Gastrocnemius medialis (tissue), 4 donors: ENCODE measurements at regions of chr21 and their contacts with region 1.

Region 1: GRCh38 chr21:38985568-38986378 is 180.0 kb downstream of the ETS2 start:
- DNase-seq: peak; percentile 47 to 65
- ATAC-seq: peak; percentile 25 to 35
- H3K4me3 ChIP-seq: no peak overlapping the region
- H3K27ac ChIP-seq: peak overlapping the region; percentile 39 to 70 (median 66)
- H3K4me1 ChIP-seq: peaks cover 68 to 70% of the 10 kb centered on the region in 2 donors
- H3K27me3 ChIP-seq: no peaks in the 10 kb centered on the region
- CTCF ChIP-seq: no peak
- POLR2A ChIP-seq: no peak

Region 2: DNA sequence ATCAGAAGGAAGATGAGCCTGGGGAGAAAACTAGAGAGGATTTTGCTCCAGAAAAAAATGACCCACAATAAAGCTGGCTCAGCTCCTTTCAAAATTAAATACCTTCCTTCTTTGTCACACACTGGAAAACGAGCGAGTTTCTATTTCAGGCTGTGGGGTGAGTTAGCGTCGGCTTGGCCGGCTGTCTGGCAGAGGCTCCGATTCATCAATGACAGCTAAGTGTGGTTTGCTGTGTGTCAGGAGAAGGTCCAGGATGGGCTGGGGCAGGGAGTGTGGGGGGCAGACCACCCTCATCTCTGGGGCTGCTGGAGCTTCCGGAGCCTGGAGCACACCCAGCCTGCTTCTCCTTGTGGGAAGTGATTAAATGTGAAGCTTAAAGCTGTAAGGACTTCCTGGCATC is 59.9 kb before region 1 on chr21:
- in situ Hi-C with region 1: no loop called
- intact Hi-C with region 1: loop called (anchors 5 kb)
- DNase-seq: peak; percentile 62 to 74
- ATAC-seq: peak; percentile 96 to 98
- H3K4me3 ChIP-seq: peak overlapping the region; percentile 26 to 38 (median 34)
- H3K27ac ChIP-seq: peak overlapping the region; percentile 69 to 78 (median 75)
- H3K4me1 ChIP-seq: peaks cover 17% of the 10 kb centered on the region in 2 donors
- H3K27me3 ChIP-seq: no peaks in the 10 kb centered on the region
- CTCF ChIP-seq: no peak
- POLR2A ChIP-seq: peak in 1 of 2 donors; percentile 19

Region 3: DNA sequence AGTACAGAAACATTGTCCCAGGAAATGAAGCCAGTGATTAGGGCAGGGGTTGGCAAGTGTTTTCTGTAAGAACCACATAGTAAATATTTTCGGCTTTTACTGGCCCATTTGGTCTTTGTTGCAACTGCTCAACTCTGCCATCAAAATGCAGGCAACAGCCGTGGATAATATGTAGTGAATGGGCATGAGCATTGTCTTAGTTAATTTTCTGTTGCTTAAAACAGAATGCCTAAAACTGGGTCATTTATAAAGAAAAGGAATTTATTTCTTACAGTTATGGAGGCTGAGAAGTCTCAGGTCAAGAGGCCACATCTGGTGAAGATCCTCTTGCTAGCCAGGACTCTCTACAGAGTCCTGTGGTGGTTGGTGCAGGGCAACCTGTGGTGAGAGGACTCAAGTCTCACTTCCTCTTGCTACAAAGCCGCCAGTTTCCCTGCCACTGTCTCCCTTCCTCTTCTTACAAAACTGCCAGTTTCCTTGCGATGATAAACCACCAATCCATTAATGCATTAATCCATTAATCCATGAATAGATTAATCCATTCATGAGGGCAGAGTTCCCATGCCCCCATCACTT is 31.1 kb after region 1 on chr21:
- in situ Hi-C with region 1: no loop called
- intact Hi-C with region 1: no loop called
- DNase-seq: no peak
- ATAC-seq: no peak
- H3K4me3 ChIP-seq: no peak overlapping the region
- H3K27ac ChIP-seq: no peak overlapping the region
- H3K4me1 ChIP-seq: no peaks in the 10 kb centered on the region
- H3K27me3 ChIP-seq: no peaks in the 10 kb centered on the region
- CTCF ChIP-seq: no peak
- POLR2A ChIP-seq: no peak